Astrocyte of the cerebellum (primary cell): ENCODE measurements at regions of chr18 and their contacts with region 1.

Region 1: DNA sequence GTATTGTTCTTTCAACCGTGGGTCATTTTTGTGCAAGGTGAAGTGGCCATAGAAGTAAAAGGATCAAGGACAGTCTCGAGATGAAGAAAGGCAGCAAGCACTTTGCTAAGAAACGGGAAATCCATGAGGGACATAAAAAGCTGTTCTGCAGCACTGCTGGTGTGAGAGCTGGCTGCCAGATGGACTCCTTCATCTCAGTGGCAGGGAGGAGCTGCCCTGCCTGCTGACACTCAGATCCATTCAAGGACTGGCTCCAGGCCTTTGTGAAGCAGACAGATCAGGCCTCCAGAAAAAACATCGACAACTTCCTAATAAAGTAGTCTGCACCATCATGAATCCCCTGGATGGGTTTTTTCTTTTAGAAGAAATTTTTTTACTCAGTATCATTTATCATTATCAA is 29.5 kb downstream of the RMC1 start:
- DNase-seq: no peak
- H3K4me3 ChIP-seq: no peak overlapping the region
- CTCF ChIP-seq: no peak

Region 2: DNA sequence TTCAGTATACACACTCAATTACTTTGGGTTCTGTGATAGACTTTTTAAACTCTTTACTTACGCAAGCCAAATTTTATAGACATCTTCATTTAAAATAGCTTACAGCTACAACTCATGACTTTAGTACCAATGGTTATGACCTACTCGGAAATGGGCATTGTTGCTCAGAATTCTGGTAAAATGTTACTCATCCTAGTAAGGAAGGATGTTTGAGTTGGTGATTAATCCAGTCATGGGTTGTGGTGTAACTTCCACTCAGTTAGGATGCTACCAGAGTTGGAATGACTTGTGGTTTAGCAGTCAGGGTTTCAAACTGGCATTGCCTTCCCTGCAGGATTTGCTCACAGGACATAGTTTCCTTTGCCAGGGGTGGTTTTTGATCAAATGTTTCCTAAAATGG is 60.9 kb after region 1 on chr18:
- in situ Hi-C with region 1: loop called (anchors 10 kb)
- DNase-seq: no peak
- H3K4me3 ChIP-seq: no peak overlapping the region
- CTCF ChIP-seq: no peak